ENCODE measurements at regions of chr12 and their contacts with region 1.

Region 1: GRCh38 chr12:115916910-115917668 is 360.4 kb downstream of the MED13L start:
- DNase-seq: no peak
- H3K4me3 ChIP-seq: no peak overlapping the region; the same call in 1 of the 2 replicates
- H3K27ac ChIP-seq: no peak overlapping the region
- H3K27me3 ChIP-seq: peaks cover 5% of the 10 kb centered on the region
- CTCF ChIP-seq: peak; percentile 83

Region 2: DNA sequence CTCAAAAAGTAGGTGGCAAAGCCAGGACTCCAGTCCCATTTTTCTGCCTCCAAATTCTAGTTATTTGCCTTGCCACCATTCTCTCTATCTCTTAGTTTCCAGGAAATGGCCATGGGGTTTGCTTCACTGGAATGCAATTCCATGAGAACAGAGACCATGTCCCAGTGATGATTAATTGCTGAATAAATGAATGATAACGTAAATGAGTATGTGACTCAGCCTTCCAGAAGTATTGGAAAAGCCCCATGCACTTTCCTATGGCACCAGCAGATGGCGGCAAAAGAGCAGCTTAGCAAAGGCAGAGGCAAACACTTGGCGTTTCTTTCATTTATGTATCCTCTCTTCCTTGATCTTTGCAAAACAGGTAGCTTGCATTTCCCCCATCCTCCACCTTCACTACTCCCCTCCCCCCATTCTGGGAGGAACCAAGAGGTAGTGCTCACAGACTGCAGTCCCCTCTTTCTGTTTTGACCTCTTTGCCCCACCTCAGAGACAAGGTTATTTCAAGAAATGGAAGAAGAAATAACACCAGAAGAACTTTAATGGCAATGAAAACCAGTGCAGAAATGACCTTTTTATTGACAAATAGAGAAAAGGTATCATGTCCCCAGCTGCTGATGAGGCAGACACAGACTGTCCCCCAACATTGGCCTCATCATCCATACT is 1254.4 kb before region 1 on chr12:
- CTCF ChIA-PET with region 1: interaction called, 39 read pairs
- POLR2A ChIA-PET with region 1: interaction called, 3 read pairs
- DNase-seq: no peak
- H3K4me3 ChIP-seq: no peak overlapping the region
- H3K27ac ChIP-seq: no peak overlapping the region
- H3K27me3 ChIP-seq: no peaks in the 10 kb centered on the region
- CTCF ChIP-seq: peak; percentile 94

Region 3: GRCh38 chr12:115857160-115857922 is 59.7 kb before region 1 on chr12:
- CTCF ChIA-PET with region 1: no interaction called
- POLR2A ChIA-PET with region 1: no interaction called
- DNase-seq: no peak
- H3K4me3 ChIP-seq: no peak overlapping the region
- H3K27ac ChIP-seq: no peak overlapping the region
- H3K27me3 ChIP-seq: peaks cover 2% of the 10 kb centered on the region
- CTCF ChIP-seq: 0 out of 2 replicates have a peak, but pooled peaks have one; percentile 19

Measured in AG04450 (cell line).